ENCODE measurements at regions of chr1 and their contacts with region 1.

Region 1: GRCh38 chr1:24003331-24003972 is 23.3 kb upstream of the SRSF10 start:
- DNase-seq: peak; percentile 81
- ATAC-seq: peak; percentile 91
- H3K4me3 ChIP-seq: no peak overlapping the region
- H3K27ac ChIP-seq: no peak overlapping the region
- H3K4me1 ChIP-seq: peaks cover 7% of the 10 kb centered on the region
- H3K27me3 ChIP-seq: no peaks in the 10 kb centered on the region
- CTCF ChIP-seq: no peak
- EP300 ChIP-seq: no peak
- POLR2A ChIP-seq: no peak
- RAD21 ChIP-seq: no peak

Region 2: GRCh38 chr1:23959041-23959460 is 44.4 kb before region 1 on chr1:
- CTCF ChIA-PET with region 1: interaction called, 10 read pairs
- POLR2A ChIA-PET with region 1: interaction called, 11 read pairs
- RAD21 ChIA-PET with region 1: interaction called, 18 read pairs
- SMC1A ChIA-PET with region 1: interaction called, 27 read pairs
- in situ Hi-C with region 1: no loop called
- intact Hi-C with region 1: no loop called
- DNase-seq: peak; percentile 96
- ATAC-seq: peak; percentile 87
- H3K4me3 ChIP-seq: peak overlapping the region; percentile 87
- H3K27ac ChIP-seq: peak overlapping the region; percentile 97
- H3K4me1 ChIP-seq: peaks cover 31% of the 10 kb centered on the region
- H3K27me3 ChIP-seq: no peaks in the 10 kb centered on the region
- CTCF ChIP-seq: peak in 2 of 3 experiments; percentile 19 to 67; a peak in 3 of 6 replicates
- EP300 ChIP-seq: peak in 1 of 2 experiments; percentile 50; a peak in 1 of 4 replicates
- POLR2A ChIP-seq: peak; percentile 68
- RAD21 ChIP-seq: peak; percentile 41

Region 3: DNA sequence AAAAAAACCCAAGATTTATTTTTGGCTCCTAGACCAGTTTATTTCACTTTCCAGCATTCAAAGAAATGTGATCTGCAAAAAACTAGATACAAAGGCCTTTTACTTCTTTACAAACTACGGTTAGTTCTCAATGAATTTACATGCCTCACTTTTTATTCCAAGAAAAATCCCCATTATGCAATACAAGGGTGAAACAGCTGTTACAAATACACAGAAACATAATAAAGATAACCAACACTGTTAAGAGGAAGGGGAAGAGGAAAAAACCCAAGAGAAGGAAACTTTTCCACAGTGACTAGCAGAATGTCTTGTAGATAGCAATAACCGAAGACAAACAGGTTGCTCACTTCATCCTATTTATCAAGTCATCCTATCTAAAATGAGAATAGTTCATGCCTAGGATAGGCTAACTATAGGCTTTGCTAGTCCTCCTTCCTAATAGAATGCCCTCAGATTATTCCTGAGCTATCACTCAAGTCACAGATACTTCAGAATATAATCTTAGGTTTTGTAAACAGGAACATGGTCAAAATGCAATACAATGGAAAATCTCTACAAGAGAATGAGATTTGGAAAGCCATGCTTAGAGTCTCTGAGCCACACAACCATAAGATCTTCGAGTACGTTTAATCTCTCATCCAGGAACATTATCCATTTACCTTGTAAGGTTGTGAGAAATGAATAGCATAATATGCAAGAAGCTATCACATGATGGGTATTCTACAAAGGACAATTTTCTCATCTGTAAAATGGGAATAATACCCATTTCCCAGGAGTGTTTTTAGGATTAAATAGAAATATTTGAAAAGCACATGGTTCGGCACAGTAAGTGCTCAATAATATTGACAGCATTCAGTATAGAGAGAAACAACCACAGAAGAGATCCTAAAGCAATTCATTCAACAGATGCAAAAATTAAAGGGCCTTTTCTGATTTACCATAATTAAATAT is 38.4 kb before region 1 on chr1:
- CTCF ChIA-PET with region 1: interaction called, 10 read pairs
- POLR2A ChIA-PET with region 1: interaction called, 8 read pairs
- RAD21 ChIA-PET with region 1: interaction called, 18 read pairs
- SMC1A ChIA-PET with region 1: interaction called, 16 read pairs
- in situ Hi-C with region 1: no loop called
- intact Hi-C with region 1: no loop called
- DNase-seq: no peak
- ATAC-seq: peak; percentile 7
- H3K4me3 ChIP-seq: peak overlapping the region; percentile 54
- H3K27ac ChIP-seq: peak overlapping the region; percentile 74
- H3K4me1 ChIP-seq: peaks cover 16% of the 10 kb centered on the region
- H3K27me3 ChIP-seq: no peaks in the 10 kb centered on the region
- CTCF ChIP-seq: no peak
- EP300 ChIP-seq: no peak
- POLR2A ChIP-seq: no peak
- RAD21 ChIP-seq: no peak

Region 4: GRCh38 chr1:23979878-23980724 is 23.4 kb before region 1 on chr1 and contains the start of gene SRSF10:
- CTCF ChIA-PET with region 1: interaction called, 22 read pairs
- POLR2A ChIA-PET with region 1: interaction called, 11 read pairs
- RAD21 ChIA-PET with region 1: interaction called, 28 read pairs
- SMC1A ChIA-PET with region 1: interaction called, 63 read pairs
- in situ Hi-C with region 1: no loop called
- intact Hi-C with region 1: no loop called
- DNase-seq: peak; percentile 98
- ATAC-seq: peak; percentile 87
- H3K4me3 ChIP-seq: peak within 1 kb of the TSS; percentile 91
- H3K27ac ChIP-seq: peak within 1 kb of the TSS; percentile 98
- H3K4me1 ChIP-seq: peaks cover 14% of the 10 kb centered on the region
- H3K27me3 ChIP-seq: no peaks in the 10 kb centered on the region
- CTCF ChIP-seq: peak; percentile 20 to 35 (median 28); a peak in 4 of 6 replicates
- EP300 ChIP-seq: no peak
- POLR2A ChIP-seq: peak; percentile 100
- RAD21 ChIP-seq: no peak
- polyA plus RNA-seq, gene SRSF10: 166 to 187 TPM

Region 5: DNA sequence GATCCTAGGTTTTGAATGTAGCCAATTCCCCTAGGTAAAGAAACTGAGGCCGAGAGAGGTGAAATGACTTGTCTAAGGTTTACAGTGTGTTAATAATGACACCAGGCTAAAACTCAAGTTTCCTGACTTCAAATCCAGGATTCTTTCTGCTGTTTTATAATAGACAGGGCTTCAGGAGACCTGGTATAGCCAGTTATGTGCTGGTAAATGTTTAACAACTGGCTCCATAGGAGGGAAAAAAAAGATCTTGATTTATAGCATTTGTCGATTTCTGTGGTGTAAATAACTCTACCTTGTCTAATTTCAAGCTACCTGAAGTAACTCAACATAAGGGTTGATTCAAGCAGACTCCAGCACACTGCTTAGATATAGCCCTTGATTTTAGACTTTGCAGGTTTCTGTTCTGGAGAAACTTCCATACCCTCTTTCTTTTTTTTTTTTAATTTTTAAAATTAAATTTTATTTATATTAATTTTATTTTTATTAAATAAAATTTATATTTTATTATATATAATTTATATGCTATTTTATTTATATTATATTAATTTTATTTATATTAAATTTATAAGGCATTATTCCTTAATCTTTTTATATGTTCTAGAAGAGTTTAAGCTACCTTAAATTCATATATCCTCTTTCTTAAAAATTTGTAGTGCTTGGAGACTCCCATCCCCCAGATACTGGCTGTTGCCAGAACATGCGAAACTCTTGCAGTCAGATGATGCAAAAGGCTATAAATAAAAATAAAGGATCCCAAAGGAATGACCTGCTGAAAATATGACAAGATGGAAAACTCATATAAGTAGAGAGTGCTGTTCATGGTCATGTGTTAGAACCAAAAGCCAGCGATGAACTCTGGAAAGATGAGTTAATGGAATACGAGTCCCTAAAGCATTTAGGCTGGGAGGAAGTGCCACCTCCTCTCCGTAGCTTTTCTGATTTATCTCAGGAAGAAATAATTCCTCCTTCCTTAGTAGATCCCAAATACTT is 12.1 kb after region 1 on chr1:
- CTCF ChIA-PET with region 1: interaction called, 9 read pairs
- POLR2A ChIA-PET with region 1: interaction called, 7 read pairs
- RAD21 ChIA-PET with region 1: interaction called, 3 read pairs
- SMC1A ChIA-PET with region 1: interaction called, 14 read pairs
- in situ Hi-C with region 1: no loop called
- intact Hi-C with region 1: no loop called
- DNase-seq: no peak
- ATAC-seq: no peak
- H3K4me3 ChIP-seq: no peak overlapping the region
- H3K27ac ChIP-seq: no peak overlapping the region
- H3K4me1 ChIP-seq: no peaks in the 10 kb centered on the region
- H3K27me3 ChIP-seq: no peaks in the 10 kb centered on the region
- CTCF ChIP-seq: no peak
- EP300 ChIP-seq: no peak
- POLR2A ChIP-seq: no peak
- RAD21 ChIP-seq: no peak

Region 6: GRCh38 chr1:24022581-24023361 is 19.3 kb after region 1 on chr1:
- CTCF ChIA-PET with region 1: interaction called, 51 read pairs
- POLR2A ChIA-PET with region 1: interaction called, 7 read pairs
- RAD21 ChIA-PET with region 1: interaction called, 10 read pairs
- SMC1A ChIA-PET with region 1: interaction called, 27 read pairs
- in situ Hi-C with region 1: no loop called
- intact Hi-C with region 1: no loop called
- DNase-seq: no peak
- ATAC-seq: no peak; the same call in 2 of the 3 replicates
- H3K4me3 ChIP-seq: no peak overlapping the region
- H3K27ac ChIP-seq: no peak overlapping the region
- H3K4me1 ChIP-seq: no peaks in the 10 kb centered on the region
- H3K27me3 ChIP-seq: no peaks in the 10 kb centered on the region
- CTCF ChIP-seq: no peak
- EP300 ChIP-seq: no peak
- POLR2A ChIP-seq: no peak
- RAD21 ChIP-seq: no peak

Region 7: GRCh38 chr1:24080131-24080530 is 76.7 kb after region 1 on chr1:
- CTCF ChIA-PET with region 1: no interaction called
- POLR2A ChIA-PET with region 1: no interaction called
- RAD21 ChIA-PET with region 1: no interaction called
- SMC1A ChIA-PET with region 1: no interaction called
- in situ Hi-C with region 1: no loop called
- intact Hi-C with region 1: no loop called
- DNase-seq: no peak
- ATAC-seq: no peak
- H3K4me3 ChIP-seq: no peak overlapping the region
- H3K27ac ChIP-seq: no peak overlapping the region
- H3K4me1 ChIP-seq: no peaks in the 10 kb centered on the region
- H3K27me3 ChIP-seq: peaks cover 0 to 2% of the 10 kb centered on the region in 2 experiments; a peak in 1 of 4 replicates
- CTCF ChIP-seq: no peak
- EP300 ChIP-seq: no peak
- POLR2A ChIP-seq: no peak
- RAD21 ChIP-seq: no peak

Region 8: GRCh38 chr1:24090736-24091135 is 87.3 kb after region 1 on chr1:
- CTCF ChIA-PET with region 1: no interaction called
- POLR2A ChIA-PET with region 1: no interaction called
- RAD21 ChIA-PET with region 1: no interaction called
- SMC1A ChIA-PET with region 1: no interaction called
- in situ Hi-C with region 1: no loop called
- intact Hi-C with region 1: no loop called
- DNase-seq: no peak
- ATAC-seq: no peak
- H3K4me3 ChIP-seq: no peak overlapping the region
- H3K27ac ChIP-seq: no peak overlapping the region
- H3K4me1 ChIP-seq: no peaks in the 10 kb centered on the region
- H3K27me3 ChIP-seq: peaks cover 0 to 6% of the 10 kb centered on the region in 2 experiments; a peak in 2 of 4 replicates
- CTCF ChIP-seq: no peak
- EP300 ChIP-seq: no peak
- POLR2A ChIP-seq: no peak
- RAD21 ChIP-seq: no peak